ENCODE measurements at regions of chr20 and their contacts with region 1.

Region 1: GRCh38 chr20:57391074-57391554 is at the start of gene RBM38:
- DNase-seq: peak in 1 of 2 donors; percentile 71
- ATAC-seq: peak; percentile 28 to 38
- H3K4me3 ChIP-seq: peak within 1 kb of the TSS; percentile 58 to 82 (median 74)
- H3K27ac ChIP-seq: peak within 1 kb of the TSS; percentile 96 to 99 (median 98)
- H3K4me1 ChIP-seq: peaks cover 53 to 55% of the 10 kb centered on the region in 2 donors
- H3K27me3 ChIP-seq: no peaks in the 10 kb centered on the region
- CTCF ChIP-seq: no peak
- POLR2A ChIP-seq: peak; percentile 46 to 71
- total RNA-seq, gene RBM38: 56.7 to 229 (median 177) TPM

Region 2: GRCh38 chr20:57464715-57465211 is 73.6 kb after region 1 on chr20:
- in situ Hi-C with region 1: no loop called
- intact Hi-C with region 1: no loop called
- DNase-seq: peak in 1 of 2 donors; percentile 44
- ATAC-seq: no peak
- H3K4me3 ChIP-seq: no peak overlapping the region
- H3K27ac ChIP-seq: no peak overlapping the region
- H3K4me1 ChIP-seq: peaks cover 15 to 21% of the 10 kb centered on the region in 2 donors
- H3K27me3 ChIP-seq: no peaks in the 10 kb centered on the region
- CTCF ChIP-seq: peak in 4 of 5 experiments; percentile 7 to 42 (median 25)
- POLR2A ChIP-seq: no peak

Region 3: GRCh38 chr20:57493091-57493615 is 102.0 kb after region 1 on chr20:
- in situ Hi-C with region 1: loop called in 3 of 4 experiments (anchors 5 kb)
- intact Hi-C with region 1: no loop called
- DNase-seq: no peak
- ATAC-seq: no peak
- H3K4me3 ChIP-seq: no peak overlapping the region
- H3K27ac ChIP-seq: no peak overlapping the region
- H3K4me1 ChIP-seq: peaks cover 9 to 10% of the 10 kb centered on the region in 2 donors
- H3K27me3 ChIP-seq: no peaks in the 10 kb centered on the region
- CTCF ChIP-seq: no peak
- POLR2A ChIP-seq: no peak

Region 4: GRCh38 chr20:57596998-57597939 is 206.2 kb after region 1 on chr20:
- in situ Hi-C with region 1: no loop called
- intact Hi-C with region 1: loop called (anchors 10 kb)
- DNase-seq: peak; percentile 32 to 35
- ATAC-seq: peak; percentile 49 to 68
- H3K4me3 ChIP-seq: peak overlapping the region in 1 of 4 donors; percentile 25
- H3K27ac ChIP-seq: no peak overlapping the region
- H3K4me1 ChIP-seq: peaks cover 0 to 6% of the 10 kb centered on the region in 2 donors
- H3K27me3 ChIP-seq: no peaks in the 10 kb centered on the region
- CTCF ChIP-seq: peak; percentile 75 to 94 (median 89)
- POLR2A ChIP-seq: no peak

Region 5: GRCh38 chr20:57718490-57719271 is 327.6 kb after region 1 on chr20:
- in situ Hi-C with region 1: loop called in 1 of 4 experiments (anchors 25 kb)
- intact Hi-C with region 1: no loop called
- DNase-seq: peak; percentile 97 to 98
- ATAC-seq: peak; percentile 92 to 96
- H3K4me3 ChIP-seq: peak overlapping the region; percentile 32 to 45 (median 36)
- H3K27ac ChIP-seq: peak overlapping the region; percentile 21 to 79 (median 57)
- H3K4me1 ChIP-seq: peaks cover 49 to 54% of the 10 kb centered on the region in 2 donors
- H3K27me3 ChIP-seq: no peaks in the 10 kb centered on the region
- CTCF ChIP-seq: no peak
- POLR2A ChIP-seq: no peak

Measured in gastrocnemius medialis (tissue), 4 donors.